Mammary epithelial cell (primary cell): ENCODE measurements at regions of chr5 and their contacts with region 1.

Region 1: DNA sequence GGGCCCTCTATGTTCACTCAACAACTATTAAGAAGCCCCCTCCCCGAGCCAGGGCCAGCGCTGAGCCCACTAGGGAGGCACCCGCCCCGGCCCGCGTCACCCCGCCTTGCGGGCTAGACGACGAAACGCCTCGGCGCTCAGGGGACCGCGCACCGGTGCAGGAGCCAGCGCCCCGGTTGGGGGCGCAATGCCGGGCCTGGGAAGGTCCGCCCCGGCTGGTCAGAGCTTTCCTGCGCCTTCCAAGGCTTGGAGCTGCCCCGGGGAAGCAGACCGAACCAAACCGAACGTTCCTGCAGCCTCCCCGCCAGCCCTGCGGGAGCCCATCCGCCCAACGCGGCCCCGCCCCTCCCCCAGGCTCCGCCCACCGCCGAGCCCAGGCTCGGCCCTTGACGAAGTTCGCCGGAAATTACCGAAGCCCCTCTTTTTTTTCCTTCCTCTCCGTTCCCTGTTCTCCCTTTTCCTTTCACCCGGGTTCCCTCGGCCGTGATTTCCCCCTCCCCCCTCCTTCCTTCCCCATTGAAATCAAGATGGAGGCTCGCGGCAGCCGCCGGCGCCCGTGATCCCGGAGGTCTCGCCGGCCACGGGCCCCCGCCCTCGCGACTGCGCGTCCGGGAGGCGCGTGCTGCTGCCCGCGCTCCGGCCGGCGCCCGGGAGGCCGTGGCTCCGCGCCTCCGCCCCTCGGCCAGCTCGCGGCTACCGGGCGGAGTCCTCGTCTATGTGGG is at the start of gene TRIO:
- DNase-seq: peak; percentile 87
- H3K4me3 ChIP-seq: peak within 1 kb of the TSS; percentile 89 to 91 (median 89)
- H3K27ac ChIP-seq: peak within 1 kb of the TSS; percentile 84
- H3K4me1 ChIP-seq: peaks cover 31% of the 10 kb centered on the region
- H3K27me3 ChIP-seq: no peaks in the 10 kb centered on the region
- CTCF ChIP-seq: peak; percentile 13 to 65
- total RNA-seq, gene TRIO: 160 to 219 TPM

Region 2: DNA sequence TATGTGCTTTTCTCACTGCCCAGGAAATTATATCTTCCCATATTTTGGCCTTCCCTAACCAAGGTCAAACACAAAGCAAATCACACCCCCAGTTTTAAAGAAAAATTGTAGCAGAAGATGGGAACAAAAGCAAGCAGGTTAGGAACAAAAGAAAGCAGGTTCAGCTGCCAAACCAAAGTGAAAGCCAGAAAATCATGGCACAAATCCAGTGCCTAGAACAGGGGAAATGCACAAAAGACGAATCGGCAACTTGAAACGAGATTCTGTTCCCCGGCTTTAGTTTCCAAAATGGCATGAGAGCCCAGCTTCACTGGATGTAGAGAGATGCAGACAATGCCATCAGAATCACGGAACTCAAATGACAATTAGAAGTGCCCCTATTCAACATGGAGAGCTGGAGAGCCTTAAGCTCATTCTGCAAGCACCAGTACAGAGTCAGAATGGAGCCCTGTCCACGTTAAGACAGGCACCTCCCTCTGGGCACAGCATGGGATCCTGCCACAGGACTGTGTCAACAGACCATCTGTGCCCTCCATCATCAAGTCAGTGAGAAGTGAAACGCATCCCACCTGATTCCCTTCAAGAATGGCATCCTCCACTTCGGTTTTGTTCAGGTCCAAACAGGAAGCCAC is 212.3 kb before region 1 on chr5:
- CTCF ChIA-PET with region 1: no interaction called
- dilution Hi-C with region 1: no loop called
- in situ Hi-C with region 1: no loop called
- intact Hi-C with region 1: no loop called
- DNase-seq: no peak
- H3K4me3 ChIP-seq: no peak overlapping the region
- H3K27ac ChIP-seq: no peak overlapping the region
- H3K4me1 ChIP-seq: peaks cover 30% of the 10 kb centered on the region
- H3K27me3 ChIP-seq: no peaks in the 10 kb centered on the region
- CTCF ChIP-seq: no peak

Region 3: DNA sequence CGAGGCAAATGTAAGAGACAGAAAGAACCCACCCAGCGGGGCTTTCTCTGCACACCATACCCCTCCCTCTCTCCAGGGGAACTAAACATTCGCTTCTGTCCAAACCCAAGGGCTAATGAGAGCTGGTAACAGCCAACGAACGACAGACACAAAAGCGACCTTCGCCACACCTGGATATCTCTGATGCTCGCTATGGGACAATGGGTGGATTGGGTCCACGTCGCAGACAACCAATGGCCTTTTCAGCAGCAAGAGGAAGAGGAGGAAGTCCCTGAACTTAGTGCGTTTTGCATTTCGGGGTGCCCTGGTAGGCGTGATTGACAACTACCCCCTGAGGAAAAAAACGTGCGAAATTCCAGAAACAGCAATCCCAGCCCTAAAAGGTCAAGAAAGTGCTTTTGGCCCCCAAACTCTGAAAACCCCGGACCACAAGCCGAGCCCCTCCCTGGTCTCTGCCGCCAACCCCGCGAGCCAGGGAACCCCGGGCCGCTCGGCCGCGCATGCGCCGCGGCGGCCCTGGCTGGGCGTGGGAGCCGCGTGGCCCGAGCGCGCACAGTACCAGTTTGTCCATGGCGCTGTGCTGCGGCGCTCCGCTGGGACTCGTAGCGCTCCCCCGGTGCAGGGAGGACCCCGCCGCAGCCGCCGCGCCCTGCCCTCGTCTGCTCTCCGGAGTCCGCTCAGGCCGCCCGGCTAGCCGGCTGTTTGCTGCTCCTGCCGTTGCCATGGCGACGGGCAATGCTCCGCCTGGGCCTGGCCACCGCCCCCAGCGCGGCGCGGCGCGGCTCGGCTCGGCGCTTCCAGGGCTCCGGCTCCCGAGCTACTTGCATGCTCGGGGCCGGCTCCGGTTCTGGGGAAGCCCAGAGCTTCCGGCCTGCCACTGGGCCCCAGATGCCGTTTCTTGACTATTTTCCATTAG is 131.6 kb before region 1 on chr5:
- CTCF ChIA-PET with region 1: no interaction called
- dilution Hi-C with region 1: no loop called
- in situ Hi-C with region 1: no loop called
- intact Hi-C with region 1: loop called (anchors 1 kb)
- DNase-seq: peak; percentile 90
- H3K4me3 ChIP-seq: peak overlapping the region; percentile 55 to 73 (median 62)
- H3K27ac ChIP-seq: peak overlapping the region; percentile 87
- H3K4me1 ChIP-seq: peaks cover 5% of the 10 kb centered on the region
- H3K27me3 ChIP-seq: no peaks in the 10 kb centered on the region
- CTCF ChIP-seq: peak in 1 of 2 donors; percentile 17

Region 4: GRCh38 chr5:14063138-14063537 is 79.8 kb before region 1 on chr5:
- CTCF ChIA-PET with region 1: no interaction called
- dilution Hi-C with region 1: loop called (anchors 5 kb)
- in situ Hi-C with region 1: no loop called
- intact Hi-C with region 1: no loop called
- DNase-seq: peak; percentile 39
- H3K4me3 ChIP-seq: no peak overlapping the region
- H3K27ac ChIP-seq: no peak overlapping the region
- H3K4me1 ChIP-seq: peaks cover 31% of the 10 kb centered on the region
- H3K27me3 ChIP-seq: no peaks in the 10 kb centered on the region
- CTCF ChIP-seq: no peak

Region 5: GRCh38 chr5:14156650-14157493 is 13.9 kb after region 1 on chr5:
- CTCF ChIA-PET with region 1: no interaction called
- dilution Hi-C with region 1: no loop called
- in situ Hi-C with region 1: no loop called
- intact Hi-C with region 1: loop called (anchors 1 kb)
- DNase-seq: peak; percentile 94
- H3K4me3 ChIP-seq: peak overlapping the region in 2 of 3 experiments; percentile 16 to 33
- H3K27ac ChIP-seq: peak overlapping the region; percentile 85
- H3K4me1 ChIP-seq: peaks cover 47% of the 10 kb centered on the region
- H3K27me3 ChIP-seq: no peaks in the 10 kb centered on the region
- CTCF ChIP-seq: no peak

Region 6: DNA sequence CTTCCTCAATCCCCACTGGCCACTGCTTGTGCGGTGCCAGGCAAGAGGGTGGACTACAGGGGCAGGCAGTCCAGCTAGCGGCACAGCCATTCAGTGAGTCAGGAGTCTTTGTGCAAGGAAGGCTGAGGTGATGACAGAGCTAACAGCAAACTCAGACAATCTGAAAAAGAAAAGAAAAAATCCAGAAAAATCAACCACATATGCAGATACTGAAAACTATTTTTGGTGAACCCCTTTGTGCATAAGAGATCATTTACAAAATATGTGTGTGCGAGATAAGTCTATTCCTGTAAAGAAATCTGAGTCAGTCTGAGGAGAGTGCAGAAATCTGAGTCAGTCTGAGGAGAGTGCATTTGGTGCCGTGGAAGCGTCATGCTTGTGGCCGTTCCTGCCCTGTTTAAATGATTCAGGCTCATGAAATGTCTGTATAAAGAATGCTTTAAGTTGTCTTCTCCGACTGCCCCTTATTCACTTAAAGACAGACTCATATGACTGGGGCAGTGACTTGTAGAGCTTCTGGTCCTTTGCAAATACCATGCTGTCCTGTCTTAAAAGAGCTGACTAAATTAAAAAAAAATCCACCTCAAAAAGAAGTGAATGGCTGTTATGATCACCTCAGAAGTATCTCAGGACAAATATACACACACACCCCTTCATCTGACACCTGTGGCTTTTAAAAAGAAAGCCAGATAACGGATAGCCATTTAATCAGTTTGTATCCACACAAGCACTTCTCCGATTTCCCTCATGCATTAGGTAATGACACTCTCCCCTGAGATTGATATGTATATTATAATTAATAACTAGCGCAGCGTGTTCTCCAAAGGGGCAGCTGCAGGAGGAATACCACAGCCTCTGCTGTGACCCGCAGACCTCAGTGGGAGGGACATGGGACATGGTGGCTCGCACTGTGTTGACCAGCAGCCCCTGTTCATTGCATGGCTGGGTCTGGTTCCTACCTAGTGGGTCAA is 47.5 kb after region 1 on chr5:
- CTCF ChIA-PET with region 1: no interaction called
- dilution Hi-C with region 1: loop called (anchors 10 kb)
- in situ Hi-C with region 1: no loop called
- intact Hi-C with region 1: loop called (anchors 1 kb)
- DNase-seq: peak; percentile 97
- H3K4me3 ChIP-seq: peak overlapping the region; percentile 24 to 28 (median 27)
- H3K27ac ChIP-seq: peak overlapping the region; percentile 97
- H3K4me1 ChIP-seq: peaks cover 62% of the 10 kb centered on the region
- H3K27me3 ChIP-seq: no peaks in the 10 kb centered on the region
- CTCF ChIP-seq: no peak

Region 7: GRCh38 chr5:14264604-14265316 is 121.8 kb after region 1 on chr5:
- CTCF ChIA-PET with region 1: interaction called, 4 read pairs
- dilution Hi-C with region 1: no loop called
- in situ Hi-C with region 1: loop called in 1 of 2 experiments (anchors 10 kb)
- intact Hi-C with region 1: no loop called
- DNase-seq: peak; percentile 91
- H3K4me3 ChIP-seq: peak overlapping the region; percentile 9 to 23 (median 20)
- H3K27ac ChIP-seq: peak overlapping the region; percentile 95
- H3K4me1 ChIP-seq: peaks cover 61% of the 10 kb centered on the region
- H3K27me3 ChIP-seq: no peaks in the 10 kb centered on the region
- CTCF ChIP-seq: no peak